PC-9 (cell line): ENCODE measurements at regions of chr7 and their contacts with region 1.

Region 1: GRCh38 chr7:46558482-46559193 is 637.6 kb upstream of the IGFBP3 start:
- DNase-seq: peak; percentile 45 to 87
- H3K4me3 ChIP-seq: peak overlapping the region; percentile 21; the same call in 1 of the 2 replicates
- H3K27ac ChIP-seq: peak overlapping the region; percentile 93
- H3K4me1 ChIP-seq: peaks cover 34% of the 10 kb centered on the region
- H3K27me3 ChIP-seq: no peaks in the 10 kb centered on the region
- CTCF ChIP-seq: no peak

Region 2: DNA sequence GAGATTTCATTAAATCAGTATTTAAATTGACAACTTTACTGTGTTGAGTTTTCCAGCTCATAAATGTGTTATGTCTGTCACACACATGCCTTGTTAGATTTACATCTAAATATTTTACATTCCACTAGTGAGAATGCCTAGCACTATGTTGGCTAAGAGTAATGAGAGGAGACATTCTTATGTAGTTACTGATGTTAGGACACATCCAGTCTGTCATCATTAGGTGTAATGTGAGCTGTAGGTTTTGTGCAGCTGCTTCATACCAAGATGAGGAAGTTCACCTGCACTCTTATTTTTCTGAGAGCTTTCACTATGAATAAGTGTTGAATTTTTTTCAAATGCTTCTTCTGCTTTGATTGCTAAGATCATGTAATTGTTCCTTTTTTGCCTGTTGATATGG is 419.6 kb before region 1 on chr7:
- CTCF ChIA-PET with region 1: no interaction called
- POLR2A ChIA-PET with region 1: interaction called, 11 read pairs
- intact Hi-C with region 1: no loop called
- DNase-seq: peak; percentile 40 to 100
- H3K4me3 ChIP-seq: no peak overlapping the region
- H3K27ac ChIP-seq: peak overlapping the region; percentile 83
- H3K4me1 ChIP-seq: peaks cover 29% of the 10 kb centered on the region
- H3K27me3 ChIP-seq: no peaks in the 10 kb centered on the region
- CTCF ChIP-seq: no peak

Region 3: DNA sequence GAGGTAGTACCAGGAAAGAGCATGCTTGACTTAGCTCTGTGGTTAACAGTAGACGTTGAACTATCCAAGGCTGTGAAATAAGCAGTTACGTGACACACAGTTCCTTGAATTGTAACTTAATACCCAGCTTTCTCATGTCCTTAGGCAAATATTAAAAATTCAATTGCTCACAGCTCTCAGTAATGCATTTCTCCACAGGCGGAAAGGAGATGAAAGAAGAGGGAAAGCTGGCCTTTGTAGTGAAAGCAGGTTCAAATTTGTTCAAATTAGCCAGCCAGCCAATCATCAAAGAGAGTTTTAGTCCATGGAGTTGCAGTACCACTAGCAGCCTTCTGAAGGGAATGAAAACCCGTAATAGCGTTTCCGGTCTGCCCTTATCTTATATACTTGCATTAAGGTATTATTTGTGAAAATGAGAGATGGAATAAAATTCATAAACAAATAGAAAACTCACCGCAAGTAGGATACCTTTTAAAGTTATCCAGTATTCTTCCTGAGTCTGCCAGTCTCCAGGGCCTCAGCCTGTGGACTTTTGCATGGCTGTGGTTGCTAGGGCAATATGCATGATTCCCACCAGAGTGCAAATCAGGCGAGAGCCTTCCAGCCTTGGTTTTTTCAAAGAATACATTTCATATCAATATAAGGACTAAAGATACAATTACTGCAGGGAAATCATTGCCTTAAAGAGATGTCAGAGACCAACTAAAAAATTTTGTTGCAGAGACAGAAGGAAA is 227.8 kb after region 1 on chr7:
- CTCF ChIA-PET with region 1: no interaction called
- POLR2A ChIA-PET with region 1: no interaction called
- intact Hi-C with region 1: loop called (anchors 2 kb)
- DNase-seq: peak; percentile 40 to 95
- H3K4me3 ChIP-seq: no peak overlapping the region
- H3K27ac ChIP-seq: peak overlapping the region; percentile 60
- H3K4me1 ChIP-seq: peaks cover 35% of the 10 kb centered on the region
- H3K27me3 ChIP-seq: no peaks in the 10 kb centered on the region
- CTCF ChIP-seq: no peak

Region 4: GRCh38 chr7:46932676-46933424 is 374.2 kb after region 1 on chr7:
- CTCF ChIA-PET with region 1: no interaction called
- POLR2A ChIA-PET with region 1: no interaction called
- intact Hi-C with region 1: loop called (anchors 5 kb)
- DNase-seq: peak; percentile 21 to 38
- H3K4me3 ChIP-seq: no peak overlapping the region
- H3K27ac ChIP-seq: peak overlapping the region; percentile 22
- H3K4me1 ChIP-seq: peaks cover 42% of the 10 kb centered on the region
- H3K27me3 ChIP-seq: no peaks in the 10 kb centered on the region
- CTCF ChIP-seq: no peak